Naive thymus-derived CD4-positive, alpha-beta T cell (primary cell): ENCODE measurements at regions of chr17 and their contacts with region 1.

Region 1: GRCh38 chr17:35088881-35089585 is 25.5 kb upstream of the RFFL start:
- DNase-seq: peak; percentile 77 to 95 (median 89)
- ATAC-seq: peak; percentile 94
- H3K4me3 ChIP-seq: peak overlapping the region; percentile 93
- H3K4me3 Mint-ChIP-seq: peak overlapping the region; percentile 93 to 98 (median 94)
- H3K27ac ChIP-seq: peak overlapping the region; percentile 89
- H3K27ac Mint-ChIP-seq: peak overlapping the region; percentile 89 to 97 (median 94)
- H3K4me1 ChIP-seq: peaks cover 13 to 27% of the 10 kb centered on the region in 2 donors
- H3K4me1 Mint-ChIP-seq: peaks cover 21 to 52% (median 44%) of the 10 kb centered on the region in 7 donors
- H3K27me3 ChIP-seq: no peaks in the 10 kb centered on the region
- H3K27me3 Mint-ChIP-seq: no peaks in the 10 kb centered on the region

Region 2: DNA sequence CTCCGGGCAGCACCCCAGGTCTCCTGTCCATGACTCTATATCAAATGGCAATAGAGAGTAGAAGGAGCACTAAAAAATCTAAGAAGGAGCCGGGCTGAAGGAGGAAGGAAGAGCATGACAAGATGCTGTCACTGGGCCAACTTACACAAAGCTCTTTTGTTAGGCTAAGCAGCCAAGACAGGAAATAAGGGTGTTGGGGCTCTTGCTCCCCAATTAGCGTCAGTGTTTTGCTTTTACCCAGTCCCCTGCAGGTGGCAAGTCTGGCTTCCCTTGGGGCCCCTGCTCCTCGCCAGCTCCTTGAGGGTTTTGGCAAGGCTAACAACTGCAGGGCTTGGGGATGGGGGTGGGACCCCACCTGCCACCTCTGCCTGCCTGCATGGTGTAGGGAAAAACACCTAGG is 248.3 kb before region 1 on chr17:
- CTCF ChIA-PET with region 1: no interaction called
- POLR2A ChIA-PET with region 1: no interaction called
- intact Hi-C with region 1: loop called in 1 of 2 experiments (anchors 1 kb)
- DNase-seq: peak in 7 of 9 donors; percentile 25 to 64 (median 61)
- ATAC-seq: peak; percentile 61
- H3K4me3 ChIP-seq: peak overlapping the region; percentile 17
- H3K4me3 Mint-ChIP-seq: peak overlapping the region in 7 of 10 donors; percentile 22 to 70 (median 52)
- H3K27ac ChIP-seq: peak overlapping the region; percentile 30
- H3K27ac Mint-ChIP-seq: peak overlapping the region in 7 of 9 donors; percentile 81 to 94 (median 89)
- H3K4me1 ChIP-seq: peaks cover 4 to 51% of the 10 kb centered on the region in 2 donors
- H3K4me1 Mint-ChIP-seq: peaks cover 0 to 21% (median 6%) of the 10 kb centered on the region in 7 donors
- H3K27me3 ChIP-seq: no peaks in the 10 kb centered on the region
- H3K27me3 Mint-ChIP-seq: peaks cover 0 to 6% (median 0%) of the 10 kb centered on the region in 5 donors

Region 3: GRCh38 chr17:34998205-34998604 is 90.8 kb before region 1 on chr17:
- CTCF ChIA-PET with region 1: interaction called, 25 read pairs
- POLR2A ChIA-PET with region 1: interaction called, 20 read pairs
- intact Hi-C with region 1: loop called (anchors 1 kb)
- DNase-seq: peak; percentile 62 to 82 (median 76)
- ATAC-seq: peak; percentile 96
- H3K4me3 ChIP-seq: no peak overlapping the region
- H3K4me3 Mint-ChIP-seq: no peak overlapping the region
- H3K27ac ChIP-seq: no peak overlapping the region
- H3K27ac Mint-ChIP-seq: peak overlapping the region; percentile 60 to 89 (median 82)
- H3K4me1 ChIP-seq: no peaks in the 10 kb centered on the region
- H3K4me1 Mint-ChIP-seq: peaks cover 5 to 10% (median 6%) of the 10 kb centered on the region in 7 donors
- H3K27me3 ChIP-seq: no peaks in the 10 kb centered on the region
- H3K27me3 Mint-ChIP-seq: no peaks in the 10 kb centered on the region

Region 4: GRCh38 chr17:35063514-35064223 is 25.4 kb before region 1 on chr17 and contains the start of gene RFFL:
- CTCF ChIA-PET with region 1: interaction called, 6 read pairs
- POLR2A ChIA-PET with region 1: interaction called, 20 read pairs
- intact Hi-C with region 1: loop called (anchors 1 kb)
- DNase-seq: peak; percentile 45 to 92 (median 80)
- ATAC-seq: peak; percentile 99
- H3K4me3 ChIP-seq: peak within 1 kb of the TSS; percentile 8
- H3K4me3 Mint-ChIP-seq: peak within 1 kb of the TSS; percentile 71 to 89 (median 80)
- H3K27ac ChIP-seq: peak within 1 kb of the TSS; percentile 71
- H3K27ac Mint-ChIP-seq: peak within 1 kb of the TSS; percentile 88 to 97 (median 94)
- H3K4me1 ChIP-seq: peaks cover 21 to 29% of the 10 kb centered on the region in 2 donors
- H3K4me1 Mint-ChIP-seq: peaks cover 37 to 80% (median 65%) of the 10 kb centered on the region in 7 donors
- H3K27me3 ChIP-seq: no peaks in the 10 kb centered on the region
- H3K27me3 Mint-ChIP-seq: no peaks in the 10 kb centered on the region
- total RNA-seq, gene RFFL: 45.0 to 74.7 (median 55.7) TPM

Region 5: GRCh38 chr17:35141681-35142466 is 52.8 kb after region 1 on chr17 and contains the start of gene NLE1:
- CTCF ChIA-PET with region 1: no interaction called
- POLR2A ChIA-PET with region 1: interaction called, 6 read pairs
- intact Hi-C with region 1: loop called (anchors 1 kb)
- DNase-seq: peak; percentile 79 to 94 (median 89)
- ATAC-seq: peak; percentile 100
- H3K4me3 ChIP-seq: peak within 1 kb of the TSS; percentile 79
- H3K4me3 Mint-ChIP-seq: peak within 1 kb of the TSS; percentile 77 to 88 (median 86)
- H3K27ac ChIP-seq: peak within 1 kb of the TSS; percentile 81
- H3K27ac Mint-ChIP-seq: peak within 1 kb of the TSS; percentile 66 to 90 (median 87)
- H3K4me1 ChIP-seq: peaks cover 6 to 13% of the 10 kb centered on the region in 2 donors
- H3K4me1 Mint-ChIP-seq: peaks cover 7 to 30% (median 21%) of the 10 kb centered on the region in 7 donors
- H3K27me3 ChIP-seq: no peaks in the 10 kb centered on the region
- H3K27me3 Mint-ChIP-seq: no peaks in the 10 kb centered on the region
- total RNA-seq, gene NLE1: 10.0 to 29.4 (median 21.8) TPM